ENCODE measurements at regions of chr1 and their contacts with region 1.

Region 1: GRCh38 chr1:246012341-246012740 is 494.7 kb downstream of the SMYD3 start:
- DNase-seq: peak; percentile 53 to 72 (median 58)
- ATAC-seq: peak; percentile 89
- H3K4me3 ChIP-seq: no peak overlapping the region
- H3K27ac ChIP-seq: no peak overlapping the region
- H3K4me1 ChIP-seq: no peaks in the 10 kb centered on the region; a peak in 2 of 5 replicates
- H3K27me3 ChIP-seq: no peaks in the 10 kb centered on the region
- CTCF ChIP-seq: peak; percentile 75 to 92 (median 83)
- EP300 ChIP-seq: no peak
- POLR2A ChIP-seq: no peak
- RAD21 ChIP-seq: peak; percentile 94 to 97

Region 2: GRCh38 chr1:245953876-245954660 is 58.3 kb before region 1 on chr1:
- CTCF ChIA-PET with region 1: no interaction called
- POLR2A ChIA-PET with region 1: no interaction called
- in situ Hi-C with region 1: no loop called
- intact Hi-C with region 1: no loop called
- DNase-seq: no peak
- ATAC-seq: peak; percentile 65
- H3K4me3 ChIP-seq: no peak overlapping the region
- H3K27ac ChIP-seq: peak overlapping the region; percentile 18; the same call in 1 of the 3 replicates
- H3K4me1 ChIP-seq: peaks cover 13 to 30% of the 10 kb centered on the region in 2 experiments
- H3K27me3 ChIP-seq: no peaks in the 10 kb centered on the region
- CTCF ChIP-seq: no peak
- EP300 ChIP-seq: no peak
- POLR2A ChIP-seq: no peak
- RAD21 ChIP-seq: no peak

Region 3: GRCh38 chr1:245999696-246000637 is 12.4 kb before region 1 on chr1:
- CTCF ChIA-PET with region 1: no interaction called
- POLR2A ChIA-PET with region 1: no interaction called
- in situ Hi-C with region 1: no loop called
- intact Hi-C with region 1: no loop called
- DNase-seq: no peak
- ATAC-seq: peak; percentile 56; the same call in 2 of the 3 replicates
- H3K4me3 ChIP-seq: no peak overlapping the region
- H3K27ac ChIP-seq: no peak overlapping the region
- H3K4me1 ChIP-seq: peaks cover 6 to 9% of the 10 kb centered on the region in 2 experiments; a peak in 4 of 5 replicates
- H3K27me3 ChIP-seq: no peaks in the 10 kb centered on the region
- CTCF ChIP-seq: peak in 2 of 3 experiments; percentile 20 to 41; a peak in 2 of 6 replicates
- EP300 ChIP-seq: no peak
- POLR2A ChIP-seq: no peak
- RAD21 ChIP-seq: peak in 1 of 2 experiments; percentile 33; a peak in 2 of 4 replicates

Region 4: GRCh38 chr1:246117066-246117791 is 104.9 kb after region 1 on chr1:
- CTCF ChIA-PET with region 1: interaction called, 6 read pairs
- POLR2A ChIA-PET with region 1: no interaction called
- in situ Hi-C with region 1: no loop called
- intact Hi-C with region 1: loop called (anchors 1 kb)
- DNase-seq: peak; percentile 53 to 85 (median 63)
- ATAC-seq: peak; percentile 88
- H3K4me3 ChIP-seq: no peak overlapping the region
- H3K27ac ChIP-seq: peak overlapping the region; percentile 38; the same call in 1 of the 3 replicates
- H3K4me1 ChIP-seq: peaks cover 4 to 38% of the 10 kb centered on the region in 2 experiments; a peak in 4 of 5 replicates
- H3K27me3 ChIP-seq: no peaks in the 10 kb centered on the region
- CTCF ChIP-seq: peak; percentile 62 to 74 (median 72)
- EP300 ChIP-seq: no peak
- POLR2A ChIP-seq: no peak
- RAD21 ChIP-seq: peak; percentile 73 to 82; a peak in 3 of 4 replicates

Region 5: GRCh38 chr1:246226041-246226440 is 213.7 kb after region 1 on chr1:
- CTCF ChIA-PET with region 1: no interaction called
- POLR2A ChIA-PET with region 1: no interaction called
- in situ Hi-C with region 1: no loop called
- intact Hi-C with region 1: loop called (anchors 5 kb)
- DNase-seq: no peak
- ATAC-seq: no peak
- H3K4me3 ChIP-seq: no peak overlapping the region
- H3K27ac ChIP-seq: no peak overlapping the region
- H3K4me1 ChIP-seq: peaks cover 0 to 8% of the 10 kb centered on the region in 2 experiments; a peak in 1 of 5 replicates
- H3K27me3 ChIP-seq: no peaks in the 10 kb centered on the region
- CTCF ChIP-seq: no peak
- EP300 ChIP-seq: no peak
- POLR2A ChIP-seq: no peak
- RAD21 ChIP-seq: no peak

Region 6: GRCh38 chr1:246450611-246451251 is 438.4 kb after region 1 on chr1:
- CTCF ChIA-PET with region 1: interaction called, 14 read pairs
- POLR2A ChIA-PET with region 1: no interaction called
- in situ Hi-C with region 1: no loop called
- intact Hi-C with region 1: loop called (anchors 1 kb)
- DNase-seq: peak; percentile 41 to 57 (median 56)
- ATAC-seq: peak; percentile 85
- H3K4me3 ChIP-seq: no peak overlapping the region
- H3K27ac ChIP-seq: no peak overlapping the region
- H3K4me1 ChIP-seq: no peaks in the 10 kb centered on the region
- H3K27me3 ChIP-seq: no peaks in the 10 kb centered on the region
- CTCF ChIP-seq: peak; percentile 63 to 95 (median 69)
- EP300 ChIP-seq: no peak
- POLR2A ChIP-seq: no peak
- RAD21 ChIP-seq: peak; percentile 96 to 97

Region 7: DNA sequence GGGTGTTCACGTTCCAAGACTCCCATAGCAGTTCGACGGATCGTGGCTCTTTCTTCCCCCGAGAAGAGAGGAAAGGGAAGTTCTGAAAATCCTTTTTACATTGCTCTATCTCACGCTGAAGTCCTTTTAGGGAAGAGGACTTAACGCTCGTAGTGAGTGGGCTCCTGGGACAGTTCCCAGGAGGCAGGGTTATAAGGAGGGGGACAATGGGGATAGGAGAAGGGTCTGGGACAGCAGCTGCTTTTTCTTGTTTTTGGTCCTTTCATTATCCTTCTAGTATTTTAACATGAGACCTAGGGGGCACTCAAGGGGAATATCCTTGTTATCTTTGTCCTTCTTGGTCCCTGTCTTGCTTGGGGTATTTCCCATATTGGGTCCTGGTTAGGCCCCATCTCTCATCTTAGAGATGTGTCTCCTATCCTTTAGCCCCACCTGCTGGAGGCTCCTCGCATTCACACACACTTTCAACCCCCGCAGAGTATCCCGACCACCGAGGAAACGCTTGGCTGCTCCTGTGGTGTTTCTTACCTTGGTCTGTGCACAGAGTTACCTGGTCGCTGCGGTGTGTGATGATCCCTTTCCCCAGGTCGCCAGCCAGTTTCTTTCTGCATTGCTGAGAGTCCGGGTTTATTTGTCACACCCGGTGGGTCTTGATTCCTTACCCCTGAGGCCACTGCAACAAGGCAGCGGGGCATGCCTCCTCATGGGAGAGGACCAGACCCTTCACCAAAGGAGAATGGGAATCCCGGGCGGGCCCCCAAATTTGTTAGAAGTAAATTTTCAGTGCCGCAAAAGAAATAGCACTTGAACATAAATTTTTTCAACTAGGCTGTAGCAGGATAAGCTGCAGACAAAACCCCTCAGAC is 741.6 kb after region 1 on chr1:
- CTCF ChIA-PET with region 1: no interaction called
- POLR2A ChIA-PET with region 1: no interaction called
- in situ Hi-C with region 1: no loop called
- intact Hi-C with region 1: loop called (anchors 10 kb)
- DNase-seq: peak; percentile 67 to 81 (median 70)
- ATAC-seq: peak; percentile 99
- H3K4me3 ChIP-seq: no peak overlapping the region
- H3K27ac ChIP-seq: no peak overlapping the region
- H3K4me1 ChIP-seq: 0 out of 5 replicates have a peak, but pooled peaks cover 0 to under 1% of the 10 kb centered on the region in 2 experiments
- H3K27me3 ChIP-seq: no peaks in the 10 kb centered on the region
- CTCF ChIP-seq: peak; percentile 82 to 94 (median 90)
- EP300 ChIP-seq: no peak
- POLR2A ChIP-seq: no peak
- RAD21 ChIP-seq: peak; percentile 75 to 87

Measured in K562 (cell line).